GM23248 (cell line): ENCODE measurements at regions of chr18 and their contacts with region 1.

Region 1: DNA sequence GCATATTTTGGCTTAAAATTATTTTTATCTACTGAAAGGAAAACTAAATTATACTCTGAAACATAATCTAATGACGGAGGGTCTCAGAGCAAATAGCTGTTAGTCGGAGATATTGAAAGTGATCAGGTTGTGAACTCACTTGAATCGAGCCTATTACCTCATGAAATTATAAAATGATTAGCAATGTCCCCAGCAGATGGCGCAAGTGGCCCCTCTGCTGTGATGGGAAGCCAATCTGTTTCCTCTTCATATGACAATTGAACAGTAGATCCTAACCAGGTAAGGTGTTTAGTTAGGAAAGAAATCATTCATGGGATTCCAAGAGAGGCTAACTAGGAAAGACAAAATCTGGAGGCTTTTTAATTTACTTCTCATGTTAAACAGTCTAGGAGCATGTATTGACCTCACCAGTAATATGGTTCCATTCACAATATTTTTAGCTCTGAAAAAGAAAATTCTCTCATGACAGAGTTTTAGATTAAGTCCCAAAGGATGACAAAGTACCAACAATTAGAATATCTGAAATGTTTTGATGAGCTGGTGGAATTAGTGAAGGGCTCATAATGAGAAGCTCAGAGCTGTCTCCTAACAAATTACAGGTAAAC is 29.9 kb upstream of the MPPE1 start:
- DNase-seq: peak; percentile 72
- H3K4me3 ChIP-seq: no peak overlapping the region
- H3K27ac ChIP-seq: no peak overlapping the region
- H3K4me1 ChIP-seq: no peaks in the 10 kb centered on the region
- H3K27me3 ChIP-seq: no peaks in the 10 kb centered on the region

Region 2: GRCh38 chr18:11883153-11883552 is 54.8 kb before region 1 on chr18:
- in situ Hi-C with region 1: no loop called
- DNase-seq: no peak
- H3K4me3 ChIP-seq: no peak overlapping the region
- H3K27ac ChIP-seq: no peak overlapping the region
- H3K4me1 ChIP-seq: 0 out of 2 replicates have a peak, but pooled peaks cover 5% of the 10 kb centered on the region
- H3K27me3 ChIP-seq: no peaks in the 10 kb centered on the region

Region 3: DNA sequence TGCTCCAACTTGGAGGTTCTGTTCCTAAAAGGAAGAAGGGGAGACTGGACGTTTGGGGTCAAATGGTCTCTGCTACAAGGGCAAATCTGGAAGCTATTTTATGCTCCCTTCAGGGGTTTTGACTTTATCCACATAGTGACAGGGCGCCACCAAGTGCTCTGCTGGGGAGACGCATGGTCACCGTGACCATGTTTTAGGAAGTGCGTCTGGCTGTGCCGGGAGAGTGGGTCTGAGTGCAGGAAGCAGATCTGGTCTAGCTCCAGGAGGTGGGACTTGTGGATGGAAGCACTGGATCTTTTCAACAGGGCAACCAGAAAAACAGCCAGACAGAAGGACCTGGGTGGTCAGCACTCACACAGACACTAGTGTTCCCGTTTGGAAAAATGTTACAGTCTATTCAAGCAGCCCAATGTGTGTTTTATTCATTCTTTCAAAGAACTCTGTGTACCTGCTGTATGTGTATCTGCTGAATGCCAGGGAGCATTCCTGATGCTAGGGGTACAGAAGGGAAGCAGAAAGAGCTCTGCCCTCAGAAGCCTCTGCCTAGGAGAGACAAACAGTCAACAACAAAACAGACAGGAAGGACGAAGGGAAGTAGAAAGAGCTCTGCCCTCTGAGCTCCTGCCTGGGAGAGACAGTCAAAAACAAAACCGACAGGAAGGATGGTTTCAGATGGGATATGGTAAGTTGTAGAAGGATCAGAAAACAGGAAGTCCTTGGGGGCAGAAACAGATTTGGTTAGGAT is 57.6 kb after region 1 on chr18:
- in situ Hi-C with region 1: loop called (anchors 10 kb)
- DNase-seq: peak; percentile 84
- H3K4me3 ChIP-seq: no peak overlapping the region
- H3K27ac ChIP-seq: peak overlapping the region; percentile 79; the same call in 1 of the 2 replicates
- H3K4me1 ChIP-seq: peaks cover 18% of the 10 kb centered on the region
- H3K27me3 ChIP-seq: no peaks in the 10 kb centered on the region